Dorsolateral prefrontal cortex (tissue), 120 donors: ENCODE measurements at regions of chr10 and their contacts with region 1.

Region 1: GRCh38 chr10:15901889-15902288 is 41.6 kb upstream of the MINDY3 start:
- DNase-seq: no peak
- H3K4me3 ChIP-seq: no peak overlapping the region
- H3K27ac ChIP-seq: no peak overlapping the region
- H3K27me3 ChIP-seq: peaks cover 0 to 20% (median 0%) of the 10 kb centered on the region in 45 donors
- CTCF ChIP-seq: no peak

Region 2: DNA sequence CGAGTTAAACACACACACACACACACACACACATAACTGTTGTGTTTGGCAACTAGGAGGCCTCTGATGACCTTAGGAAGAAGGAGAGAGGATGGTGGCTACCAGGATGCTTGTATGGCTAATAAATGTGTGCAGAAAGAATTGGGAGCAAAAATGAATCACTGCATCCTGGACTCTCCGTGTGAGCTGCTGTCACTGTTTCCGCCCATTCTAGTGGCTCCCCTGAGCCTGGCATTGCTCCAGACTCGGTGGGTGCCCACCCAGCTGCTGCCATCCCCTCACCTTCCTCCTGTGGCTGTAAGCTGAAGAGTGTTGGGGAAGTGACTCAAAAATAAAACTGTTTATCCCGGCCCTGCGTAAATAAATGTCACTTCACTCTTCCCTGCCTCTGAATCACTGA is 107.9 kb after region 1 on chr10:
- intact Hi-C with region 1: no loop called
- DNase-seq: no peak
- H3K4me3 ChIP-seq: no peak overlapping the region
- H3K27ac ChIP-seq: no peak overlapping the region
- H3K27me3 ChIP-seq: no peaks in the 10 kb centered on the region
- CTCF ChIP-seq: no peak

Region 3: GRCh38 chr10:16519908-16520861 is 618.3 kb after region 1 on chr10:
- intact Hi-C with region 1: loop called in 1 of 2 experiments (anchors 10 kb)
- DNase-seq: peak in 1 of 10 donors; percentile 39
- H3K4me3 ChIP-seq: peak overlapping the region in 58 of 59 donors; percentile 5 to 73 (median 54)
- H3K27ac ChIP-seq: peak overlapping the region in 49 of 59 donors; percentile 28 to 86 (median 74)
- H3K27me3 ChIP-seq: peaks cover 0 to 56% (median 25%) of the 10 kb centered on the region in 45 donors
- CTCF ChIP-seq: no peak

Region 4: DNA sequence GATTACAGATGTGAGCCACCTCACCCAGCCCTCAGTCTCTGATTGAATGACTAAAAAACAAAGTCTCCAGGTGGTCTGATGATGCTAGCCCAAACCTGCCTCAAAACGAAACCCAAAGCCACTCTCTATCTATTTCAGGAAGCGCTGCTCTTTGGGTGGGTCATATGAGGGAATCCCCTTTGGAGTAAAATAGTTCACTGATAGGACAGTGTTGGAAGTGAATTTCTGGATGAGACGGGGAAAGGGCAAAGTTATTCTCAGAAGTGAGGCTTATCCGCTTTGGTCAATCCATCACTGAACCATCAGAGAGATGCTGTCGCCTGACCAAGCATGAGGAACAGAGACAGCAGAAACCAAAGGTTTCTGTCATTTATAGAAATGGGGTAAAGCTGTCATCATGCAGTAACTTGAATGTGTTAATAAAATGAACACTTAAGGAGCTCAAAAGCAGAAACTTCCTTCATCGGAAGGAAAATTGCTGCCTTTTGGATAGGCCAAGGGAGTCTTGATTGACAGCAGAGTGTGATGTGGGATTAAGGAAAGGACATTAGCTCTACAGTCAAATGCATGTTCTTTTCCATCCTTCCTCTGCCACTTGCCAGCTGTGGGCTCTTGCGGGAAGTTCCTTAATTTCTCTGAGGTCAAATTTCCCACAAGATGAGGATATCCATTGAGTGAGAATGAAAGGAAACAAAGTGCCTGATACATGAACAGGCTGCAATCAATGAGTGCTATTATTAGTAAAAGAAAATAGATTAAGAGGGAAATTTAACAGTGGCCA is 684.7 kb after region 1 on chr10:
- intact Hi-C with region 1: no loop called
- DNase-seq: no peak
- H3K4me3 ChIP-seq: no peak overlapping the region
- H3K27ac ChIP-seq: no peak overlapping the region
- H3K27me3 ChIP-seq: no peaks in the 10 kb centered on the region
- CTCF ChIP-seq: no peak

Region 5: DNA sequence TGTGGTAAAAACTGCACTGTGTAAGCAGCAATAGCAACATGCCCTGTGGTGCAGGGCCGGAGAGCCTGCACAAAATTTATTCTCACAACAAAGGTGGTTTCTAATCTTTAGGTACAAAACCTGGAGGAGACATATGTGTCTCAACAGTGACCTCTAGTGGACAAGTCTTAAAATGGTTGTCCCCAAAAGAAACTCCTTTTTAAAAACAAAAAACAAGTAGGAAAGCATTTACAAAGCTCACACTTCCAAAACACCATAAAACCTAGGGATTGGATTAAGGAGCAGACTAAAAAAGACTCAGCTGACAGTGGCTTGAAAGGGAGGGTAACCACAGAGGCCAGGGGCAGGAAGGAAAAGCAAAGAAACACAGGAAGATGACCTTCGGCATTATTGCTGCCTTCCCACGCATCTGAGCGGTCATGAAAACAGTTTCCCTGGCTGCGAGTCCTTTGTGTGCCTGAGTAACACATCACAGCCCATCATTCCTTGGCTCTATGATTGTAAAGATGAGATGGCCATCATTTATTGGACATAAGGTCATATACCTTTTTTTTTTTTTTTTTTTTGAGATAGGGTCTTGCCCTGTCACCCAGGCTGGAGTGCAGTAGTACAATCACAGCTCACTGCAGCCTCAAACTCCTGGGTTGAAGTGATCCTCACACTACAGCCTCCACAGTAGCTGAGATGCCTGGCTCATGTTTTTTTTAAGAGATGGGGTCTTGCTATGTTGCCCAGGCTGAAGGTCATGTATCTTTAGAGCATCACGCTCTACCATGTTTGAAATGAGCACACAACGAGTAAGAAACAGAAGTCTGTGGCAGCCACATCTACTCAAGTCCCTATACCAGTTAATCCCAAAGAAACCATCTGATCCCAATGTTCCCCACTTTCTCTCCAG is 875.8 kb after region 1 on chr10:
- intact Hi-C with region 1: loop called (anchors 5 to 10 kb)
- DNase-seq: peak in 1 of 10 donors; percentile 29
- H3K4me3 ChIP-seq: peak overlapping the region in 1 of 59 donors; percentile 7
- H3K27ac ChIP-seq: peak overlapping the region in 12 of 59 donors; percentile 9 to 64 (median 40)
- H3K27me3 ChIP-seq: no peaks in the 10 kb centered on the region
- CTCF ChIP-seq: peak; percentile 59 to 95 (median 83)

Region 6: DNA sequence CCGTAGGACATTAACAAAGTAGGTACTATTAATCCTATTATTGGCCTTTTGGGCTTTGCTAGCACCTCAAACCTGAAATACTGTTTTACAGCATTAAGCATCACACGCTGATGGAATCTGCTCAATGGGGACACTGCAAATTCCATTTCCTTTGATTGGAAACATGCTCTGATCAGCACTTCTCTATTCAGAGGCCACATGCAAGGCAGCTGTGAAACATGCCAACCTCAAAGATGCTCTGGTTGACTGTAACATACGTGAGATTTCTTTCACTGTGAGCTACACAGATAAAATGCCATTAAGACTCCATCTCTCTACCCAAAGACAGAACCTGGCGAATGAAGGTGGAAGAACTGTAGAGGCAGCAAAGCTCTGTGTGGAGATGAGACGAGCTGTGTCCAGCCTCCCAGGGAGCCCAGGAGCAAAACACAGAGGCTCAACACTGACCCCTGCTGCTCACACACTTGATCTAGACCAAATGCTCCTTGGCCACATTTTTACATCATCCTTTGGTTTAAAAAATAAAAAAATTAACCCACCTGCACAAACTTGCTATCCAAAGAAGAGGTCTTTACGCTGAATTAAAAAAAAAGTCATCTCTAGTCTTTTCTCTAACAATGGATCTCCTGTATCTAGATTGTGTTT is 907.3 kb after region 1 on chr10:
- intact Hi-C with region 1: loop called in 1 of 2 experiments (anchors 10 kb)
- DNase-seq: peak in 8 of 10 donors; percentile 35 to 68 (median 60)
- H3K4me3 ChIP-seq: no peak overlapping the region
- H3K27ac ChIP-seq: no peak overlapping the region
- H3K27me3 ChIP-seq: no peaks in the 10 kb centered on the region
- CTCF ChIP-seq: peak; percentile 15 to 72 (median 58)